Pancreas (tissue), 10 donors: ENCODE measurements at regions of chrX and their contacts with region 1.

Region 1: GRCh38 chrX:50988649-50989048 is 78.1 kb downstream of the BMP15 start:
- DNase-seq: peak in 1 of 6 donors; percentile 22
- ATAC-seq: peak in 3 of 4 donors; percentile 54 to 72 (median 68)
- H3K4me3 ChIP-seq: no peak overlapping the region
- H3K27ac ChIP-seq: no peak overlapping the region
- H3K4me1 ChIP-seq: no peaks in the 10 kb centered on the region
- H3K27me3 ChIP-seq: peaks cover 0 to 14% (median 0%) of the 10 kb centered on the region in 4 donors
- CTCF ChIP-seq: peak in 2 of 4 donors; percentile 31 to 47

Region 2: GRCh38 chrX:50684871-50685270 is 303.8 kb before region 1 on chrX:
- intact Hi-C with region 1: loop called in 2 of 3 experiments (anchors 5 to 10 kb)
- DNase-seq: no peak
- ATAC-seq: no peak
- H3K4me3 ChIP-seq: no peak overlapping the region
- H3K27ac ChIP-seq: no peak overlapping the region
- H3K4me1 ChIP-seq: no peaks in the 10 kb centered on the region
- H3K27me3 ChIP-seq: peaks cover 0 to 9% (median 5%) of the 10 kb centered on the region in 4 donors
- CTCF ChIP-seq: no peak

Region 3: DNA sequence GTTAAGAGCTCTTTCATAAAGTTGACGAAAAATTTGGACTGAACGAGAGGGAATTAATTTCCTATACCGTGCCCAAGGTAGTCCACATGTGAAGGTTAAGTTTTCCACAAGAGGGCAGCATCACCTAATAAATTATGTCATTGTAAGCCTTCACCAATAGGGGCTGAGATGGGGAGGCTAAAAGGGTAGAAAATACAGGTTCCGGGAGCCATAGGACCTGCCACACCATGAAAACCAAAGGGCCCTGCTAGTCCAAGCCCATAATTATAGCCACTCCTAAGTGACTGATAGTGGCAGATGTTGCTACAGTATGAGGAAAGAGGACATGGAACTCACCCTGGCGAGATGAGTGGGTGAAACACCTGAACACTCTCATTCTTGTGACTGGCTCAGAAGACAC is 296.8 kb before region 1 on chrX:
- intact Hi-C with region 1: loop called in 2 of 3 experiments (anchors 5 to 10 kb)
- DNase-seq: peak in 1 of 6 donors; percentile 22
- ATAC-seq: peak; percentile 60 to 89 (median 86)
- H3K4me3 ChIP-seq: no peak overlapping the region
- H3K27ac ChIP-seq: no peak overlapping the region
- H3K4me1 ChIP-seq: no peaks in the 10 kb centered on the region
- H3K27me3 ChIP-seq: peaks cover 0 to 21% (median 5%) of the 10 kb centered on the region in 4 donors
- CTCF ChIP-seq: peak; percentile 55 to 76 (median 58)